Calu3 (cell line): ENCODE measurements at regions of chr3 and their contacts with region 1.

Region 1: DNA sequence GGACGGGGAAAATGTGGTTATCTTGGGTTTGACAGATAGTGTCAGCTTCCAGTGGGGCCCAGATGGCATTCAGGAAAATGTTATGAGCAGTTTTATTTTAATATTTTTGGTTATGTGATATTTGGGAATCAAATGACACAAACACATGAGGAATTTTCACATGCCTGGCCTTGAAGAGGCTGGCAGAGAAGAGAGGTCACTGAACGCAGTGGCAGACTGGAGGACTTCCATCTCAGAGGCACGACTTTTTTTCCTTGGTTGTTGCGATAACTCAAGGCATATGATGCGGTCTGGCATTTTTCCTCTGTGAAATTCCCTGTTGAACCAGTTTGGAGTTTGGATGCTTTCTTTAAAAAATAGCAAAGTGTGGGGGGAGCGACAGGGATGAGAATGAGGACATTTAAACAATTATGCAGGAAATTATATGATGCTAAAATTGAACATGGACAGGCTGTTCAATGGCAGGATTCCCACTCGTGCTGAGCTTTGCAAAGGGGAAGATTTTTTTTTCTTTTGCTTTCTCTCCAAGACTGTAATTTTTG is 36.9 kb upstream of the ARPP21 start:
- DNase-seq: no peak
- H3K4me3 Mint-ChIP-seq: no peak overlapping the region
- H3K27ac Mint-ChIP-seq: no peak overlapping the region
- H3K4me1 Mint-ChIP-seq: no peaks in the 10 kb centered on the region
- H3K27me3 Mint-ChIP-seq: no peaks in the 10 kb centered on the region
- CTCF ChIP-seq: no peak

Region 2: GRCh38 chr3:35383719-35384555 is 218.5 kb before region 1 on chr3:
- CTCF ChIA-PET with region 1: no interaction called
- intact Hi-C with region 1: no loop called
- DNase-seq: peak; percentile 12
- H3K4me3 Mint-ChIP-seq: no peak overlapping the region
- H3K27ac Mint-ChIP-seq: no peak overlapping the region
- H3K4me1 Mint-ChIP-seq: no peaks in the 10 kb centered on the region
- H3K27me3 Mint-ChIP-seq: no peaks in the 10 kb centered on the region
- CTCF ChIP-seq: no peak

Region 3: DNA sequence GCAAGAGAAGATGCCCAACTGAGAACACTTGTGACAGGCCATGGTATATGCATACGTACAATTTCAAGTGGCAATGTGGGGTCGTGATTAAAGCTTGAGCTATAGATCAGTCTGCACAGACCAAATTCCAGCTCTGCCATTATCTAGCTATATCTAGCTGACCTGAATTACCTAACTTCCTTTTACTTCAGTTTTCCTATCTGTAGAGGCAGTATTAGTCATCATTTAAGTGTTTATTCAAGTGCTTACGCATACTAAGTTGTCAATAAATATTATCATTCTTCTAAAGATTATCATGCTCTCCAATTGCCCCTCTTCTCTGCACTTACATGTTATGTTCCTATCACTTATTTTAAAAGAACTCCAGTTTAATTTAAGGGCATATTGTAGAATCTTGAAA is 124.7 kb after region 1 on chr3:
- CTCF ChIA-PET with region 1: no interaction called
- intact Hi-C with region 1: loop called (anchors 1 kb)
- DNase-seq: no peak
- H3K4me3 Mint-ChIP-seq: no peak overlapping the region
- H3K27ac Mint-ChIP-seq: no peak overlapping the region
- H3K4me1 Mint-ChIP-seq: peaks cover 11% of the 10 kb centered on the region
- H3K27me3 Mint-ChIP-seq: peaks cover 13% of the 10 kb centered on the region
- CTCF ChIP-seq: no peak